K562 (cell line): ENCODE measurements at regions of chr6 and their contacts with region 1.

Region 1: DNA sequence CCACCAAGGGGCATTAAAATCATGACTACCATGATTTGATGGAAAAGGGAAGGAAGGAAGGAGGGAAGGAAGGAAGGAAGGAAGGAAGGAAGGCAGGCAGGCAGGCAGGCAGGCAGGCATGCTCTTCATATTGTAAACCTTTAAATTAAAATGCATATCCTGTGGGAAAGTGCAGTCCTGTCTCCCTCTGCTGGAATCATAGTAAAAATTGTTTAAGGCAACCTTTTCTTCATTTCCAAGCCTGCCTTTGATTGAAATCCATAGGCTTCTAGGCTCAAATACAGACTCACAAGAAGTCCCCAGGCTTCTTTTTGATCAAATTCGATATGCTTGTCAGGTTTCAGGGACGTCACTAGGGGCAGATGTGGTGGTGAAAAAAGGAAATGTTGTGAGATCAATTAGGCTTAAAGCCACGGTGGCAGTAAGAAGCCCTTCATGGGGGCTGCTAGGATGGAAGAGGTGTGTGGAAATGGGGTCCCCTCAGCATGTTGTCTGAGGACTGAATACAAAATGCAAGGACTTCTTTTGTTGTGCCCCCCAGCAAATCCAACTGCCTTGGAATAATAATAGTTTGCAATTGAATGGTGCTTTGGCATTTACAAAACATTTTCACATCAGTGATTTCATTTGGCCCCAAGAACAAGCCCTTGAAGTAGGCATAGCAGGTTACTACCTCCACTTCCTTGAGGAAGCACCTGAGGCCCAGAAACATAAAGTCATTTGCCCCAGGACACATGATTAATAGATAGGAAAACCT is 25.6 kb upstream of the GABRR1 start:
- DNase-seq: peak in 2 of 4 experiments; percentile 36 to 39
- ATAC-seq: peak; percentile 68
- H3K4me3 ChIP-seq: no peak overlapping the region
- H3K27ac ChIP-seq: no peak overlapping the region
- H3K4me1 ChIP-seq: no peaks in the 10 kb centered on the region
- H3K27me3 ChIP-seq: peaks cover 3 to 6% of the 10 kb centered on the region in 2 experiments; a peak in 3 of 5 replicates
- CTCF ChIP-seq: peak; percentile 45 to 68 (median 55); a peak in 4 of 6 replicates
- EP300 ChIP-seq: no peak
- POLR2A ChIP-seq: no peak
- RAD21 ChIP-seq: peak; percentile 84 to 91

Region 2: DNA sequence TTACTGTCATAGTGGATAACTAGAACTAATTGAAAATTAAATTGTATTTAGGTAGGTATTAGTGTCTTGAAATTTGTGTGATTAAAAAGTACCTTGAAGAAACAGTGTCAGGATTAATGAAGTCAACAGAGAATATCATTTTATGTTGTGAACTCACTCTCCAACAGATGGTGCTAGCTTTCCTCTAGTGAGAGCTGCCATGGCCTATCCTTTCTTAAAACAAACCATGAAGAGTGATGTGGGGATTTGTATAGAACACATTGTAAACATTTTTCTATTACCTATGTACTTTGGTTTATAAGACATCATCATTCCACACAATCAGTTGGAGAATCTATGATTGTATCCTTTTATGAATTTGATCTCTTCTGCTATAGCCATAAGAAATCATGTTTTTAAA is 120.1 kb before region 1 on chr6:
- CTCF ChIA-PET with region 1: no interaction called
- POLR2A ChIA-PET with region 1: no interaction called
- in situ Hi-C with region 1: no loop called
- intact Hi-C with region 1: loop called (anchors 1 kb)
- DNase-seq: no peak
- ATAC-seq: peak; percentile 61; the same call in 1 of the 3 replicates
- H3K4me3 ChIP-seq: no peak overlapping the region
- H3K27ac ChIP-seq: no peak overlapping the region
- H3K4me1 ChIP-seq: no peaks in the 10 kb centered on the region
- H3K27me3 ChIP-seq: no peaks in the 10 kb centered on the region
- CTCF ChIP-seq: peak; percentile 2 to 58 (median 37); a peak in 4 of 6 replicates
- EP300 ChIP-seq: no peak
- POLR2A ChIP-seq: no peak
- RAD21 ChIP-seq: peak; percentile 56 to 81

Region 3: GRCh38 chr6:89161326-89162046 is 81.3 kb before region 1 on chr6:
- CTCF ChIA-PET with region 1: no interaction called
- POLR2A ChIA-PET with region 1: no interaction called
- in situ Hi-C with region 1: no loop called
- intact Hi-C with region 1: loop called (anchors 5 kb)
- DNase-seq: peak; percentile 6 to 22 (median 10)
- ATAC-seq: peak; percentile 74
- H3K4me3 ChIP-seq: no peak overlapping the region
- H3K27ac ChIP-seq: no peak overlapping the region
- H3K4me1 ChIP-seq: no peaks in the 10 kb centered on the region
- H3K27me3 ChIP-seq: peaks cover 2 to 12% of the 10 kb centered on the region in 2 experiments; a peak in 3 of 5 replicates
- CTCF ChIP-seq: peak; percentile 11 to 31 (median 18); a peak in 2 of 6 replicates
- EP300 ChIP-seq: no peak
- POLR2A ChIP-seq: no peak
- RAD21 ChIP-seq: peak in 1 of 2 experiments; percentile 41; a peak in 1 of 4 replicates

Region 4: GRCh38 chr6:89475634-89476033 is 232.9 kb after region 1 on chr6:
- CTCF ChIA-PET with region 1: no interaction called
- POLR2A ChIA-PET with region 1: no interaction called
- in situ Hi-C with region 1: no loop called
- intact Hi-C with region 1: no loop called
- DNase-seq: no peak
- ATAC-seq: peak; percentile 51; the same call in 2 of the 3 replicates
- H3K4me3 ChIP-seq: no peak overlapping the region
- H3K27ac ChIP-seq: no peak overlapping the region
- H3K4me1 ChIP-seq: no peaks in the 10 kb centered on the region; a peak in 1 of 5 replicates
- H3K27me3 ChIP-seq: peaks cover 7 to 11% of the 10 kb centered on the region in 2 experiments; a peak in 4 of 5 replicates
- CTCF ChIP-seq: no peak
- EP300 ChIP-seq: no peak
- POLR2A ChIP-seq: no peak
- RAD21 ChIP-seq: no peak